Gastrocnemius medialis (tissue), 4 donors: ENCODE measurements at regions of chr13 and their contacts with region 1.

Region 1: GRCh38 chr13:35789335-35790165 is 313.1 kb upstream of the MAB21L1 start:
- DNase-seq: no peak
- ATAC-seq: peak; percentile 53 to 58
- H3K4me3 ChIP-seq: no peak overlapping the region
- H3K27ac ChIP-seq: no peak overlapping the region
- H3K4me1 ChIP-seq: peaks cover 0 to 8% of the 10 kb centered on the region in 2 donors
- H3K27me3 ChIP-seq: no peaks in the 10 kb centered on the region
- CTCF ChIP-seq: peak in 4 of 5 experiments; percentile 12 to 55 (median 38)
- POLR2A ChIP-seq: no peak

Region 2: GRCh38 chr13:35621989-35622388 is 167.6 kb before region 1 on chr13:
- in situ Hi-C with region 1: loop called in 1 of 4 experiments (anchors 10 kb)
- intact Hi-C with region 1: no loop called
- DNase-seq: no peak
- ATAC-seq: no peak
- H3K4me3 ChIP-seq: no peak overlapping the region
- H3K27ac ChIP-seq: no peak overlapping the region
- H3K4me1 ChIP-seq: no peaks in the 10 kb centered on the region
- H3K27me3 ChIP-seq: no peaks in the 10 kb centered on the region
- CTCF ChIP-seq: no peak
- POLR2A ChIP-seq: no peak

Region 3: DNA sequence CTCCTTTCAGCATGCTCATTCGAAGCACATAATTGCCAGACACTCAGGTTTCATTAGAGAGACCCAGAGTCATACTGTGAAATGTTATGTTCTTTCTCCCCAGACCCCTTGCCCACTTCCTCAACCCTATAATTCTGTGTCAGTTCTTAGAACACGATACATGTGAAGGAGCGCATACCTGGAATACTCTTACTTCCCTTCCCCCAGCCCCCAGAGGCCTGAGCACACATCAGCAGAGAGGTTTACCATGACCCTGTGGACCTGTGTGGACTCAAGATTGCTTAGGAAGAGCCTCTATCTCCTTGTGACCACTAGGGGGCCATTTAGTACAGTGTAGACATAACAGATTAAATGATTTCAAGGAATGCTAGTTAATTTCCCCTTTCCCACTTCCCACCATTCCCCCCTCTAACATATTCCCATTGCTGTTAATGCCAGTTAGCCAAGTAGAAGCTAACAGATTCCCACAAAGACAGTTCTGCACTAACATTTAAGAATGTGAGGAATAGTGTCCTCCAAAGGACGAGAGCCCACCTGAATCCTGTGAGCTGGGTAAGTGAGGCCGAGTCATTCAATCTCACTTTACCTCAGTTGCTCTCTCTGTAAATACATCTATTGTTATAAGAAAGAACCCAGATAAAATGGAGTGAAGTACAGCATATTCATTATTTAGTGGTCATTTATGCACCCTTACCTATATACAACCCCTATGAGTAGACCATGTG is 158.8 kb before region 1 on chr13:
- in situ Hi-C with region 1: loop called in 1 of 4 experiments (anchors 10 kb)
- intact Hi-C with region 1: loop called (anchors 2 kb)
- DNase-seq: no peak
- ATAC-seq: peak in 1 of 2 donors; percentile 60
- H3K4me3 ChIP-seq: no peak overlapping the region
- H3K27ac ChIP-seq: no peak overlapping the region
- H3K4me1 ChIP-seq: no peaks in the 10 kb centered on the region
- H3K27me3 ChIP-seq: no peaks in the 10 kb centered on the region
- CTCF ChIP-seq: peak in 4 of 5 experiments; percentile 46 to 59 (median 55)
- POLR2A ChIP-seq: no peak

Region 4: DNA sequence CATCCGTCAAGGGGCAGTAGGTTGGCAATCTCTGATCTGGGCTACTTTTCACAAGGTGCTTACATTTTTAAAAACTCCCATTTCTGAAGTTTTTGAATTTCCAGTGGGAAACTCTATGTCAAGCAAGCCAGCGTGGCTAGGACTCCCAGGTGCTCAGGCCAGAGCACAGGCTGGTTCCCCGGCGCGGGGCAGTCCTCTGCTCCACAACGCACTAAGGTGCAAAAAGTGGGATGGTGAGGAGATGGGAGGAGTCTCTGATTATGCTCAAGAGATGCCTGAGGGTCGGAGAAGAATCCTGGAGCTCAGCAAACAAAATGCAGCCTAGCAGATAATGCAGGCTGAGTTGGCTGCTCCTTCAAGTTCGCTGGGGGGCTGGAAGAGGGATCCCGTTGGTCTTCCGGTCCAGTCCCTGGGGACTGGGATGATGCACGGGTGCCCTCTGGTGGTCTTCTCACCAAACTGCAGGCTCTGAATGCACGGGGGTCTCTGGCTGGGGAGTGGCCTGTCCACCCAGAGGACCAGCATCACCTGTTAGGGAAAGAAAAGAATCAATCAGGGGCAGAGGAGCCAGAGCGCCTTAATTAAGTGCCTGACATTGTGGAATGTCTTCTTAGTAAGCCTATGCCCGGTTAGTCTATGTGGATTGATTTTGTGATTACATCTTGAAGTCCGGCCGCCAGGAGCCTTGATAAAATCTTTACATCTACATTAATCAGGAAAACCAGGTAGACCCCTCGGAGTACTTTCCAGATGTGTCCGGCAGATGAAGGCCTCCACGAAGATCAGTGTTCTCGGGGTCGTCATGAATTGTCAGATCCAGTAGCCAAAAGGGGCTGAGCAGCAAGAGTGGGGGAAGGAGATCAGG is 68.6 kb before region 1 on chr13:
- in situ Hi-C with region 1: no loop called
- intact Hi-C with region 1: loop called (anchors 10 kb)
- DNase-seq: peak in 1 of 2 donors; percentile 22
- ATAC-seq: no peak
- H3K4me3 ChIP-seq: peak overlapping the region in 2 of 4 donors; percentile 23 to 34
- H3K27ac ChIP-seq: peak overlapping the region in 3 of 4 donors; percentile 3 to 19 (median 9)
- H3K4me1 ChIP-seq: peaks cover 22 to 23% of the 10 kb centered on the region in 2 donors
- H3K27me3 ChIP-seq: no peaks in the 10 kb centered on the region
- CTCF ChIP-seq: peak; percentile 66 to 91 (median 82)
- POLR2A ChIP-seq: no peak